ENCODE measurements at regions of chr9 and their contacts with region 1.

Region 1: DNA sequence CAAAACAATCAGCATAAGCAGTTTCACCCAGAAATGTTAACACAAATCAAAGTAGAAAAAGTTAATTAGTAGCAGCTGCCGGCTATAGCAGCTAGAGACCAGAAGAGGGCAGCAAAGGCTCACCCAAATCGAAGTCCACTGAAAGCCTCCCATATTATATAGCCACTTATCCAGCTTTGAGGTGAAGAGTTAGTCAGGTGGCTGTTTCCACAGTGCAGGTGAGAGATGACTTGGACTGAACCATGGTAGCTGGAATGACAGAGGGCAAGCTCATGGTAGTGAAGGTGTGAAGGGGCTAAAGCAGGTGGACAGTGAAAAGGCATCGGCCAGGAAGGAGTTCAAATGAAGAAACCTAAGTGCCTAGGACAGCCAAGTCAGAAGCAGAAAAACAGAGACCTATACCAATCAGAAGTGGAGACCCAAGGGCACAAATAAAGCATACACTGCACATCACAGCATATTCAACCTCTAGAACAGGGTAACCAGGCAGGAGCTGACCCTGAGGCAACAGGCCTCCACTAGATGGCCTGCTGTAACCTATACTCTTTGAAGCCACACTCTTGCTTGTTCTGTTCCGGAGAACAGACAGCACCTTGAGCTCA is 7.2 kb upstream of the RNF38 start:
- DNase-seq: peak; percentile 35 to 88 (median 51)
- ATAC-seq: peak; percentile 96
- H3K4me3 ChIP-seq: no peak overlapping the region
- H3K4me3 Mint-ChIP-seq: no peak overlapping the region
- H3K27ac ChIP-seq: no peak overlapping the region
- H3K27ac Mint-ChIP-seq: peak overlapping the region; percentile 67
- H3K4me1 ChIP-seq: peaks cover 6% of the 10 kb centered on the region
- H3K4me1 Mint-ChIP-seq: peaks cover 26% of the 10 kb centered on the region
- H3K27me3 ChIP-seq: no peaks in the 10 kb centered on the region
- H3K27me3 Mint-ChIP-seq: no peaks in the 10 kb centered on the region
- CTCF ChIP-seq: peak; percentile 95

Region 2: GRCh38 chr9:36450110-36450732 is 43.0 kb after region 1 on chr9:
- CTCF ChIA-PET with region 1: interaction called, 12 read pairs
- POLR2A ChIA-PET with region 1: interaction called, 4 read pairs
- intact Hi-C with region 1: loop called (anchors 1 kb)
- DNase-seq: peak in 7 of 14 experiments; percentile 4 to 66 (median 52)
- ATAC-seq: no peak
- H3K4me3 ChIP-seq: no peak overlapping the region
- H3K4me3 Mint-ChIP-seq: no peak overlapping the region
- H3K27ac ChIP-seq: no peak overlapping the region
- H3K27ac Mint-ChIP-seq: no peak overlapping the region
- H3K4me1 ChIP-seq: peaks cover 13% of the 10 kb centered on the region
- H3K4me1 Mint-ChIP-seq: peaks cover 35% of the 10 kb centered on the region
- H3K27me3 ChIP-seq: no peaks in the 10 kb centered on the region
- H3K27me3 Mint-ChIP-seq: no peaks in the 10 kb centered on the region
- CTCF ChIP-seq: peak; percentile 80

Region 3: DNA sequence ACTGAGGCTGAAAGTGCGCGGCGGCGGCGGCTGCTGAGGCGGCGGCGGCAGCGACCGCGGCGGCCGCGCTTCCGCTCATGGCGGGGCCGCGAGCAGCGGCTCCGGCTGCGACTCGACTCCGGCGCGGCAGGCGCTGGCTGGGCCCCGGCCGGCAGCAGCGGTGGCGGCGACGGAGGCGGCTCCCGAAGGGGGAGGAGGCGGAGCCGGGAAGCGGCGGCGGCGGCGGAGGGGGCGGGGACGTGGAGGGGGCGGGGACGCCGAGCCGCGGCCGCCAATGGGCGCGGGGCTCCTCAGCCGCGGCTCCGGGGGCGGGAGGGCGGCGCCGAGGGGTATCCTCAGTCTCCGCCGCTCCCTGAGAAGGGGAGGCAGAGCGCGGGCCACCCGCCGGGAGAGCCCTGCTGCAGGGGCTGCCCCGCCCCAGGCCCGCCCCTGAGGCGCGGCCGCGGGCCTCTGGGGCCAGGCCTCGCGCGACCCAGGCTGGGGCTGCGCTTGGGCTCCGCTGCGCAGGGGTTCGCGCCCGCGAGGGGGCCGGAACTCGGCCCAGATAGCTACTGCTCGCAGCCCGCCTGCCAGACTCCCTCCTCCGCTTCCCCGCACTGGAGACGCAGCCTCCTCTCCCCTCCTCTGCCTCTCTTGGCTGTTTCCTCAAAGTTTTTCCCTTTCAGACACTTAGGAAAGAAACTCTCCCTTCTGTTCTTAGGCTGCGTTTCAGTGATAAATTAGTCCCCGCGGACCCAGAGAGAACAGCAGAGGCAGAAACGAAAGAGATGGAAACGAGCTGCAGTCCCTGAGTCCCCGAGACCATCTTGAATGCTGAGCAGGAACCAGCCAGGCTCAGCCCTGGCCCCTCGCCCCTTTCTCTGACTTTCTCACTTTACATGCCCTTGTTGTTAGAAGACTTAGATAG is 80.5 kb after region 1 on chr9:
- CTCF ChIA-PET with region 1: interaction called, 9 read pairs
- POLR2A ChIA-PET with region 1: interaction called, 19 read pairs
- intact Hi-C with region 1: no loop called
- DNase-seq: peak; percentile 75 to 97 (median 90)
- ATAC-seq: peak; percentile 84
- H3K4me3 ChIP-seq: peak overlapping the region; percentile 75
- H3K4me3 Mint-ChIP-seq: peak overlapping the region; percentile 94
- H3K27ac ChIP-seq: peak overlapping the region; percentile 84 to 87
- H3K27ac Mint-ChIP-seq: peak overlapping the region; percentile 97
- H3K4me1 ChIP-seq: peaks cover 42% of the 10 kb centered on the region
- H3K4me1 Mint-ChIP-seq: peaks cover 67% of the 10 kb centered on the region
- H3K27me3 ChIP-seq: no peaks in the 10 kb centered on the region
- H3K27me3 Mint-ChIP-seq: no peaks in the 10 kb centered on the region
- CTCF ChIP-seq: no peak

Region 4: GRCh38 chr9:36560857-36561221 is 153.6 kb after region 1 on chr9:
- CTCF ChIA-PET with region 1: interaction called, 64 read pairs
- POLR2A ChIA-PET with region 1: interaction called, 20 read pairs
- intact Hi-C with region 1: no loop called
- DNase-seq: no peak
- ATAC-seq: no peak
- H3K4me3 ChIP-seq: no peak overlapping the region
- H3K4me3 Mint-ChIP-seq: no peak overlapping the region
- H3K27ac ChIP-seq: no peak overlapping the region
- H3K27ac Mint-ChIP-seq: no peak overlapping the region
- H3K4me1 ChIP-seq: no peaks in the 10 kb centered on the region
- H3K4me1 Mint-ChIP-seq: peaks cover 2% of the 10 kb centered on the region
- H3K27me3 ChIP-seq: no peaks in the 10 kb centered on the region
- H3K27me3 Mint-ChIP-seq: no peaks in the 10 kb centered on the region
- CTCF ChIP-seq: no peak

Region 5: GRCh38 chr9:36728651-36729520 is 321.7 kb after region 1 on chr9:
- CTCF ChIA-PET with region 1: interaction called, 15 read pairs
- POLR2A ChIA-PET with region 1: interaction called, 9 read pairs
- intact Hi-C with region 1: loop called (anchors 1 kb)
- DNase-seq: peak; percentile 38 to 73 (median 48)
- ATAC-seq: peak; percentile 49
- H3K4me3 ChIP-seq: no peak overlapping the region
- H3K4me3 Mint-ChIP-seq: no peak overlapping the region
- H3K27ac ChIP-seq: no peak overlapping the region
- H3K27ac Mint-ChIP-seq: no peak overlapping the region
- H3K4me1 ChIP-seq: no peaks in the 10 kb centered on the region
- H3K4me1 Mint-ChIP-seq: no peaks in the 10 kb centered on the region
- H3K27me3 ChIP-seq: peaks cover 0 to under 1% of the 10 kb centered on the region in 2 experiments
- H3K27me3 Mint-ChIP-seq: no peaks in the 10 kb centered on the region
- CTCF ChIP-seq: peak; percentile 82

Measured in CD4-positive, alpha-beta T cell (primary cell).